ENCODE measurements at regions of chr9 and their contacts with region 1.

Region 1: GRCh38 chr9:129420721-129421120 is 200.2 kb downstream of the C9orf50 start:
- DNase-seq: no peak
- H3K4me3 ChIP-seq: no peak overlapping the region
- H3K27ac ChIP-seq: no peak overlapping the region
- H3K4me1 ChIP-seq: peaks cover 5% of the 10 kb centered on the region; the same call in 1 of the 2 replicates
- H3K27me3 ChIP-seq: no peaks in the 10 kb centered on the region
- CTCF ChIP-seq: no peak

Region 2: GRCh38 chr9:129442803-129443511 is 22.2 kb after region 1 on chr9:
- CTCF ChIA-PET with region 1: interaction called, 4 read pairs
- POLR2A ChIA-PET with region 1: interaction called, 15 read pairs
- intact Hi-C with region 1: no loop called
- DNase-seq: no peak
- H3K4me3 ChIP-seq: no peak overlapping the region
- H3K27ac ChIP-seq: no peak overlapping the region
- H3K4me1 ChIP-seq: no peaks in the 10 kb centered on the region
- H3K27me3 ChIP-seq: peaks cover 7% of the 10 kb centered on the region; the same call in 1 of the 2 replicates
- CTCF ChIP-seq: no peak

Measured in PC-9 (cell line).